Gastrocnemius medialis (tissue), 4 donors: ENCODE measurements at regions of chr3 and their contacts with region 1.

Region 1: DNA sequence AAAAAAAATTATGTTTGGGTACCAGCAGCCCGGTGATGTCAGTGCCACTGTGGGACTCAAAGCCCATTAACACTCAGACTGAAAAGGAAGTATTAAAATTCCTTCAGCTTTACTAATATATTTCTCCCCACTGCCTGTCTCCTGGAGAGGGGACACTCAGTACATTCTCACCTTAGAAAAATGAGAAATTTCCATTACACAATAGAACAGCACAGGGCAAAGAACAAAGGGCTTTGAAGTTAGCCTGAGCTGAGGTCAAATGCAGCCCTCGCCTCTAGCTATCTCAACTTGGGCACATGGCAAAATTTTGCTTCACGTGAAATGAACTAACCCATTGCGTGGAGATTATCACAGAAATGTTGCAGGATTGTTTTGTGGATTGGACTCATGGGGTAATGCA is 80.8 kb downstream of the RARB start:
- DNase-seq: no peak
- ATAC-seq: peak; percentile 43 to 50
- H3K4me3 ChIP-seq: no peak overlapping the region
- H3K27ac ChIP-seq: peak overlapping the region; percentile 57 to 85 (median 76)
- H3K4me1 ChIP-seq: peaks cover 44 to 58% of the 10 kb centered on the region in 2 donors
- H3K27me3 ChIP-seq: no peaks in the 10 kb centered on the region
- CTCF ChIP-seq: no peak
- POLR2A ChIP-seq: no peak

Region 2: GRCh38 chr3:25427942-25428788 is 80.7 kb before region 1 on chr3 and contains the start of gene RARB:
- in situ Hi-C with region 1: no loop called
- intact Hi-C with region 1: loop called (anchors 2 kb)
- DNase-seq: peak; percentile 40 to 64
- ATAC-seq: peak; percentile 88 to 94
- H3K4me3 ChIP-seq: peak within 1 kb of the TSS; percentile 64 to 83 (median 72)
- H3K27ac ChIP-seq: peak within 1 kb of the TSS; percentile 80 to 88 (median 82)
- H3K4me1 ChIP-seq: peaks cover 19 to 20% of the 10 kb centered on the region in 2 donors
- H3K27me3 ChIP-seq: no peaks in the 10 kb centered on the region
- CTCF ChIP-seq: no peak
- POLR2A ChIP-seq: peak; percentile 70 to 83
- total RNA-seq, gene RARB: 1.2 to 3.0 (median 1.9) TPM

Region 3: DNA sequence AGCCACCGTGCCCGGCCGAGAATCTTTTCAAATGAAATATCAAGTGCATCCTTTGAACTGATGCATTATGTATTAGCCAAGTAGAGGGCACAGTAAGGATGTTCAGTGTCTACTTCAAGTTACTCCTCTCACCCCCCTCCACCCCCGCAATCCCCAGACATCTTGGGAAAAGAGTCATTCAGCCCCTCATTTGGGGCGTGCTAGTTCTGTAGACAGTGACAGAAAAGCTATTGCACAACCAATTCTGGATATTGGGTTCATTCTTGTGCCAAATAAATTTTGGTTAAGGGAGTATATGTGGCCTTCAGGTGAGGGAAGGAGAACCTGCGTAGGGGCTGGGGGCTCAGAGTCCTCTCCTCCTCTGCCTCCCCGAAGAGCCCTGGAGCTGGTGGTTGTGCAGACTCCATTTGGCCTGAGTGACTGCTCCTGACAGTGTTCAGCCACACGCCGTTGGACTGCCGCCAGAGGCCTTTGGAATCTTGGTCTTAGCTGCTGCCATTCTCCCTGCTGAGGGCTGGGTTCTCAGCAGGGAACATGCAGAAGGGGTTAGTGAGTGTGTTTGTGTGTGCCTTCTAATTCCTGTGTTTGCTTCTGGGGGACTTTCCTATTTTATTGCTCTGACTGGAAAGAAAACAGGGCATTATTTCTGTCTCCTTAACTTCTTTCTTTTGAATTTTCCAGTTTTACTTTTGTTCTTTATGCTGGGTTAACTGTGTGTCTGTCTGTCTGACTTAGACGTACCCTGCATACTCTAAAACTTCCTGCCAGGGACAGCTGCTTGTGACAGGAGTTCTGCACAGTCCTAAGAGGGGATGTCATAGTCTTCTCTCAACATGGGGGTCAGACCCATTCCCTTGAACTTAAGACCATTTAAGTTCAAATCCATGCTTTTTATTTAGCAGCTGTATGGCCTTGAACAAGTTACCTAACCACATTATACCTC is 59.9 kb before region 1 on chr3:
- in situ Hi-C with region 1: no loop called
- intact Hi-C with region 1: loop called (anchors 5 kb)
- DNase-seq: peak; percentile 67 to 79
- ATAC-seq: peak; percentile 85 to 88
- H3K4me3 ChIP-seq: no peak overlapping the region
- H3K27ac ChIP-seq: peak overlapping the region; percentile 43 to 75 (median 69)
- H3K4me1 ChIP-seq: peaks cover 30 to 35% of the 10 kb centered on the region in 2 donors
- H3K27me3 ChIP-seq: no peaks in the 10 kb centered on the region
- CTCF ChIP-seq: no peak
- POLR2A ChIP-seq: no peak

Region 4: GRCh38 chr3:25468866-25469319 is 40.0 kb before region 1 on chr3:
- in situ Hi-C with region 1: no loop called
- intact Hi-C with region 1: loop called (anchors 2 kb)
- DNase-seq: peak; percentile 43 to 49
- ATAC-seq: peak; percentile 61 to 70
- H3K4me3 ChIP-seq: no peak overlapping the region
- H3K27ac ChIP-seq: peak overlapping the region in 3 of 4 donors; percentile 70 to 82 (median 77)
- H3K4me1 ChIP-seq: peaks cover 53 to 83% of the 10 kb centered on the region in 2 donors
- H3K27me3 ChIP-seq: no peaks in the 10 kb centered on the region
- CTCF ChIP-seq: peak; percentile 4 to 47 (median 31)
- POLR2A ChIP-seq: no peak